ENCODE measurements at regions of chr17 and their contacts with region 1.

Region 1: GRCh38 chr17:38777641-38778250 is 21.6 kb downstream of the PIP4K2B start:
- DNase-seq: no peak
- H3K4me3 ChIP-seq: no peak overlapping the region
- H3K27ac ChIP-seq: no peak overlapping the region
- H3K4me1 ChIP-seq: no peaks in the 10 kb centered on the region
- H3K27me3 ChIP-seq: no peaks in the 10 kb centered on the region
- CTCF ChIP-seq: no peak
- EP300 ChIP-seq: no peak
- POLR2A ChIP-seq: no peak
- RAD21 ChIP-seq: no peak

Region 2: GRCh38 chr17:38748149-38748891 is 29.4 kb before region 1 on chr17 and contains the start of gene PCGF2:
- CTCF ChIA-PET with region 1: no interaction called
- POLR2A ChIA-PET with region 1: no interaction called
- DNase-seq: peak; percentile 68 to 93
- H3K4me3 ChIP-seq: peak within 1 kb of the TSS; percentile 78 to 90 (median 88)
- H3K27ac ChIP-seq: peak within 1 kb of the TSS; percentile 87
- H3K4me1 ChIP-seq: peaks cover 7 to 29% (median 21%) of the 10 kb centered on the region in 4 experiments
- H3K27me3 ChIP-seq: peaks cover 0 to 11% (median 5%) of the 10 kb centered on the region in 4 experiments; a peak in 5 of 7 replicates
- CTCF ChIP-seq: no peak
- EP300 ChIP-seq: no peak
- POLR2A ChIP-seq: no peak
- RAD21 ChIP-seq: no peak
- total RNA-seq, gene PCGF2: 86.1 and 93.3 TPM in 2 replicates

Region 3: GRCh38 chr17:38761612-38762011 is 16.1 kb before region 1 on chr17:
- CTCF ChIA-PET with region 1: interaction called, 11 read pairs
- POLR2A ChIA-PET with region 1: interaction called, 10 read pairs
- DNase-seq: peak in 1 of 2 experiments; percentile 75
- H3K4me3 ChIP-seq: no peak overlapping the region
- H3K27ac ChIP-seq: no peak overlapping the region
- H3K4me1 ChIP-seq: no peaks in the 10 kb centered on the region
- H3K27me3 ChIP-seq: no peaks in the 10 kb centered on the region
- CTCF ChIP-seq: peak; percentile 75 to 95 (median 93)
- EP300 ChIP-seq: no peak
- POLR2A ChIP-seq: no peak
- RAD21 ChIP-seq: peak; percentile 82 to 85